ENCODE measurements at regions of chr4 and their contacts with region 1.

Region 1: DNA sequence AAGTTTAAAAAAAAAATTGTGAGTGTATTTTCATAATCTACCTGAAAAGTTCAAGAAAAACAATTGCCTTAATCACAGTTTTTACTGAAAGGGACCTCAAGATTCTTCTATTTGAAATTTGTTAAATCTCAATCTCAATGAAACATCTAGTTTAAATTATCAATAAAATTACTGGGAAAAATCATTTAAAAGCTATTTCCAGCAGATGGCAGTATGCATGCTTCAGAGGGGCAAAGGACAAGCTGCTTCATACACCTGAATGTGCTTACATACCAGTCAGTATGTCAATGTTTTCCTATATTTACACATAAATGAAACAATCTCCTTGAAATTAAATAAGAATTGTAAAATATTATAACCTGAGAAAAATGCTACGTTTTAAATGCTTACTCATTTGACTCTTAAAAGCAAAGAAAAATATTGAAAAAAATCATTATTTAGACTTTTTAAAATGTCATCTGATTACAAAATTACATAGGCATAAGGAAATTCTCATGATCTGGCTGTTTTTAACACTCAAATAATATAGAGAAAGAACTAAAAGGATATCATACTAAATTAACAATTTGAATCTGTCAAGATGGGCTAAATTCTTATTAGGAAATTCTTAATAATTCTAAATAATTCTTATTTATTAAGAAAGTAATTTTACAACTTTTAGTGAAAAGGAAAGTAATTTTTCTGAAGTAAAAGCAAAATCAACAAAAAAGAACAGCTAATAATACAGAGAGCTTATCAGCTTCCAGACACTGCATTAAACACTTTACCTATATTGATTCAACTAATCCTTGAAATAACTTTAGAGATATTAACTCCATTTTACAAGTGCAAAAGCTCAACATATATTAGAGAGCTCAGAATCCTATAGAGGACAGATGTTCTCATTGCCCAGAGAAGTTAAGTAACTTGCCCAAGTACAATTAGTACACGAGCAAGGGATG is 242.1 kb downstream of the ADAMTS3 start:
- DNase-seq: peak; percentile 21
- H3K4me3 ChIP-seq: no peak overlapping the region
- H3K27ac ChIP-seq: peak overlapping the region in 1 of 2 experiments; percentile 34; a peak in 2 of 4 replicates
- H3K4me1 ChIP-seq: peaks cover 0 to 11% of the 10 kb centered on the region in 2 experiments; a peak in 2 of 4 replicates
- H3K27me3 ChIP-seq: no peaks in the 10 kb centered on the region
- CTCF ChIP-seq: peak; percentile 85
- EP300 ChIP-seq: no peak
- RAD21 ChIP-seq: peak; percentile 90

Region 2: DNA sequence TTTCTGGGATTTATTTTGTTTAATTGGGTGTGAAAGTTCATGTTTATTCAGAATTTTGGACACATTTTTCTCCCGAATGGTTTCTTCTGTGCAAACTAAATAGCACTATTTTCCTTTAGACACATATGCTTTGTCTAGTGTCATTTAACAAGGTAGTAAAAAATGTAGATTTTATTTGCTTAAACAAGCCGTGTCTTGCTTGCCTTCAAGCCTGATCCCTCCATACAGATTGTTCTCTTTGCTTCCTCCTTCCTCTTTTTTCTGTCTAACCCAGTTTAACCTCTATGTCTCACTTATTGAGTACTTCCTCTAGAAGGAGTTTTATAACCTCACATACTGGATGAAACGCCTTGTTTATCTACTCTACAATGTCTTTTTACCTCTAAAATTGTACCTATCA is 83.3 kb before region 1 on chr4:
- CTCF ChIA-PET with region 1: no interaction called
- POLR2A ChIA-PET with region 1: no interaction called
- DNase-seq: no peak
- H3K4me3 ChIP-seq: no peak overlapping the region
- H3K27ac ChIP-seq: no peak overlapping the region
- H3K4me1 ChIP-seq: no peaks in the 10 kb centered on the region
- H3K27me3 ChIP-seq: no peaks in the 10 kb centered on the region
- CTCF ChIP-seq: no peak
- EP300 ChIP-seq: no peak
- RAD21 ChIP-seq: no peak

Region 3: GRCh38 chr4:72295966-72296557 is 30.9 kb before region 1 on chr4:
- CTCF ChIA-PET with region 1: interaction called, 10 read pairs
- POLR2A ChIA-PET with region 1: no interaction called
- DNase-seq: peak; percentile 48
- H3K4me3 ChIP-seq: no peak overlapping the region
- H3K27ac ChIP-seq: no peak overlapping the region
- H3K4me1 ChIP-seq: no peaks in the 10 kb centered on the region; a peak in 2 of 4 replicates
- H3K27me3 ChIP-seq: no peaks in the 10 kb centered on the region
- CTCF ChIP-seq: peak; percentile 84
- EP300 ChIP-seq: no peak
- RAD21 ChIP-seq: peak; percentile 92

Region 4: GRCh38 chr4:72312032-72312650 is 14.8 kb before region 1 on chr4:
- CTCF ChIA-PET with region 1: interaction called, 25 read pairs
- POLR2A ChIA-PET with region 1: no interaction called
- DNase-seq: no peak
- H3K4me3 ChIP-seq: 0 out of 4 replicates have a peak overlapping the region, but pooled peaks of 1 of the 2 experiments have one; percentile 4
- H3K27ac ChIP-seq: peak overlapping the region; percentile 77 to 79
- H3K4me1 ChIP-seq: peaks cover 11 to 14% of the 10 kb centered on the region in 2 experiments; a peak in 3 of 4 replicates
- H3K27me3 ChIP-seq: no peaks in the 10 kb centered on the region
- CTCF ChIP-seq: no peak
- EP300 ChIP-seq: peak in 1 of 2 experiments; percentile 29; a peak in 1 of 4 replicates
- RAD21 ChIP-seq: no peak

Region 5: DNA sequence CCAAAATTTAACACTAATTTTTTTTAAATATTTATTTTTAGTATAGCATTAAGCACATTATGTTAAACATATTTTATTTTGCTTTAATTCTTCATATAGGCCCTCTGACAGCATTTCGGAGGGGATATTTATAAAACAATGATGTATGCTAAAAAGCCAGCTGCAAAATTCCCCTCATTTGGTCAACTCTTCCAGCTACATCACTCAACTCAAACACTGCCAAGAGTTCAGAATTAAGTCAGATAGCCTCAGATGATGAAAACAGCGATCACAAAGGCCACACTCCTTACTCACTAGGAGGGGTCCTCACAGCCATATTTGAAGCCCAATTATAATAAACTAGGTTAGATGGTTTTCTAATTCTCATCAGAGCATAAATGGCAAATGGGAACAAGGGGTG is 95.5 kb after region 1 on chr4:
- CTCF ChIA-PET with region 1: interaction called, 15 read pairs
- POLR2A ChIA-PET with region 1: no interaction called
- DNase-seq: no peak
- H3K4me3 ChIP-seq: no peak overlapping the region
- H3K27ac ChIP-seq: peak overlapping the region in 1 of 2 experiments; percentile 96; a peak in 2 of 4 replicates
- H3K4me1 ChIP-seq: peaks cover 5 to 31% of the 10 kb centered on the region in 2 experiments; a peak in 3 of 4 replicates
- H3K27me3 ChIP-seq: no peaks in the 10 kb centered on the region
- CTCF ChIP-seq: no peak
- EP300 ChIP-seq: no peak
- RAD21 ChIP-seq: no peak

Region 6: DNA sequence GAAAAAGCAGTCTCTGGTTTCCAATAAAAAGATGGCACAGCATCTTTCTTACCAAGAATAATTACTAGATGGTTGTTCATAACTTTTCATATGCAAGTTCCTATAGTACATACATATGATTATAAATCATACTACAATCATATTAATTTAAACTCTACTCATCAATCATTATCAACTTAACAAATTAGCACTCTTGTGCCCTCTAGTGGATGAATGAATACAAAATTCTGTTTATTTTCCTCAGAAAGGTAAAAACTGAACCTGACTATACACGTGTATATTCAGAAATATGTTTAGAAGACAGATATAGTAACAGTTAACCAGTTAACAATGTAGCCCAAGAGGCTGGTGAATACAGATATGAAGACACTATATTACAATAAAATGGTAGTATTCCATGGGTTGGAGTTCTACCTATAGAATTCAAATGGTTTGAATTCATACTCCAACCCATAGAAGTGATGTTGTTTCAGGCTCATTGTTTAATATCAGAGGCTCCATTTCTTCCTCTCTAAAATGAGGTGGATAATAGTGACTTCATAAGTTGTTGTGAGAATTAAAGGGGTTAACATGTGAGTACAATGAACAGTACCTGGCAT is 142.0 kb after region 1 on chr4:
- CTCF ChIA-PET with region 1: interaction called, 54 read pairs
- POLR2A ChIA-PET with region 1: no interaction called
- DNase-seq: no peak
- H3K4me3 ChIP-seq: no peak overlapping the region; a peak in 1 of 4 replicates
- H3K27ac ChIP-seq: no peak overlapping the region; a peak in 1 of 4 replicates
- H3K4me1 ChIP-seq: peaks cover 0 to 4% of the 10 kb centered on the region in 2 experiments; a peak in 2 of 4 replicates
- H3K27me3 ChIP-seq: no peaks in the 10 kb centered on the region
- CTCF ChIP-seq: peak; percentile 80
- EP300 ChIP-seq: no peak
- RAD21 ChIP-seq: peak; percentile 65